ENCODE measurements at regions of chr3 and their contacts with region 1.

Region 1: GRCh38 chr3:4350789-4351163 is 47.6 kb downstream of the SETMAR start:
- DNase-seq: peak; percentile 14
- H3K4me3 ChIP-seq: no peak overlapping the region
- CTCF ChIP-seq: peak; percentile 50

Region 2: DNA sequence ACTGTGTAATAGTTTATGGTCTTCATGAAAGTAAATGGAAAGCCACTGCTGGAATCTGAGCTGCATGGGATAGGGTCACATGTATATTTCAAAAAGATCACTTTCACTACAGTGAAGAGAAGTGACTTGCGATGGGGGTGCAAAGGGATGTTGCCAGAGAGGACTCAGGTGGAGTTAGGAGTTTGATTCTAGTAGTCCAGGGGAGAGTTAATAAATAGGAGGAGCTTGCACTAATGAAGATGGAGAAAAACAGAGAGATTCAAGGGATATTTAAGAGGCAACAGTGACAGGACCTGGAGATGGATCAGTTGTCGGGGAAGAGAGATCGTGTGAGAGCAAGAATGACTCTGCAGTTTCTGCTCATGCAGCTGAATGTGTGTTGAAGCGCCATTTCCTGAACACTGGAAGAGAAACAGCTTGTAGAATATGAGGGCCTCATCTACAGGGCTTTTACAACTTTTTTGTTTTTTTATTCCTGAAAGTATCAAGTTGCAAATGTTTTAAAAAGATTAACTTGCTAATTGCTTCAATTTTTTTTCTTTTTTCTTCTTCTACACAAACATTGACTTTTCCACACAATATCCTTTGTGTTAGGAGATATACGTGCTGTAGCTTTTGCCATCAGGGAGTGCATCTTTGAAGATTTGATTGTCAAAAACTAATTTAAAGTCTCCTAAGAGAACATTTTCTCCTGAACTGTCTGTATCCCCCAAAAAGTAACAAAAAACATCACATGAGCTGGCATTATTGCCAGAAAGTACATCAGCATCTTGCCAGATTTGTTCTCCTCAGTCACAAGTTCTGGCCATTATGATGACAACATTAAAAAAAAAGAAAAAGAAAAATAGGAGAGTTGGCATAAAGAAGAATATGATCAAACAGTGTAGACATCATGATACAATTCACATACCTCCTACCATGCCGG is 10.1 kb before region 1 on chr3:
- CTCF ChIA-PET with region 1: interaction called, 41 read pairs
- POLR2A ChIA-PET with region 1: no interaction called
- DNase-seq: no peak
- H3K4me3 ChIP-seq: no peak overlapping the region
- CTCF ChIP-seq: no peak

Region 3: DNA sequence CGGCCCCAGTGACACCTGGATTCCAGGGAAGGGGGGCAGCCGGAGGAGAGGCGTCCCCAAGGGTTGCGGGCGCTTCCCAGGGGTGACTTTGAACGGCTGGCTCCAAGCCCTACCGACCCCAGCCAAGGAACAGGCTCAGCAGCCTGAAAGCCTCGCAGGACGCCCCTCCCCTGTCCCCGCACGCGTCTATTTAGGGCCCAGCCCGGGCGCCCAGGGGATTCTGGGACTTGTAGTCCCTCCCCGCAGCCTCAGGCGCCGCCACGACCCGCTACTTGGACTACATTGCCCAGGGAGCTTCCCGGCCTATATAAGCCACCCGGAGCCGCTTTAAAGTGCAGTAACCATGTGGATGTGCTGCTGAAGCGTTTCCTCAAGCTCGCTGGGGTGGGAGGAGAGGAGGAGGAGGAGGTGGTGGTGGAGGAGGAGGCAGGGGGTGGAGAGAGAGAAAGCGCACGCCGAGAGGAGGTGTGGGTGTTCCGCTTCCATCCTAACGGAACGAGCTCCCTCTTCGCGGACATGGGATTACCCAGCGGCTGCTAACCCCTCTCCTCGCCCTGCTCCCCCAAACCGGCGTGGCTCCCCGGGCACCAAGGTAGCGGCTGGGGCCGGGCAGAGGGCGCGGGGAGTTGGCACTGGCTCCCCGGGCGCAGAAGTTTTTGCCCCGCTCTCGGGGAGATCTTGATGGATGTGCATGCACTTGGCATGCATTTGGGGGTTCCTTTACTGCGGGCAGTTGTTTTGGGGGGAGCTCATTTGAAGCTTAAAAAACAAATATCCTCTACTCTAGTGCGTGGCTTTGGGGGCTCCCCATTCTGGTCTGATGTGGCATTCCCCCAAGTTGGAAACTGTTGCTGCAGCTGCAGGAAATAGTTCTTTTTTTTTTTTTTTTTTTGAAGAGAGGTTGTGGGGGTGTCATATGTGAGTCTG is 142.5 kb after region 1 on chr3 and contains the start of gene ITPR1:
- CTCF ChIA-PET with region 1: interaction called, 11 read pairs
- POLR2A ChIA-PET with region 1: no interaction called
- DNase-seq: peak; percentile 76
- H3K4me3 ChIP-seq: peak within 1 kb of the TSS; percentile 86
- CTCF ChIP-seq: peak; percentile 0

Region 4: DNA sequence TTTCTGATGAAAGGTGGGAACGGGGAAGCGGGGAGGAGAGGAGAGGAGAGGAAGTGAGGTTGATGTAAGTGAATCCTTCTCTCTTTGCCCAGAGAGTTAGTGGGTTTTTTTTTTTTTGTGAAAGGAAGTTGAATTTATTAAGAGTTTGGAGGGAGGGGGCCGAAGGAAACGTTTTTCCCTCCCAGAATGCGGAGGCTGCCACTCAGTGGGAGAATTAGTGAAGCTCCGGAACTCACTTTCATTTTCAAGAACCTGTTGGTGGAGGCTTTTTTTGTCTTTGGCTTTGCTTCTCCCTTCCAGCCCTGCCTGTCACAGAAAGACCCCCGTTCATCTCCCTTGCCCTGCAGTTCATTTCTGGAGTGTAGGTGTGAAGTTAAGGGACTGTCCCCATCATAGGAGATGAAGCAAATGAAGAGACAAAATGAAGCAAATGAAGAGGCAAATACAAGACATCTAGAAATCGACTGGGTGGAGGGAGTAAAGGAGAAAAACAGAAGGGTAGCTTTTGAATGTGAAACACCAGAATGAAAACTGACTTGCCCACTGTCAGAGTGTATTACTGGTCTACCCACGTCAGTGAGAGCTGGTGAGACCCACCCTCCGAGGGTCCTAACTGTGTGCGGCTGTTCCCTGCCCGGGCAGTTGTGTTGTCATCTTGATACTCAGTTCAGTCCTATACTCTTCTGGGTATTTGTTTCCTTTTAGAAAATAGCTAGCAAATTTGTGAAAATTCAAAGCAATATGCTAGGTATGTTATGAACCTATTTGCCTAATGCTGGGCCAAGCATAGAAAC is 233.9 kb after region 1 on chr3:
- CTCF ChIA-PET with region 1: interaction called, 12 read pairs
- POLR2A ChIA-PET with region 1: no interaction called
- DNase-seq: no peak
- H3K4me3 ChIP-seq: no peak overlapping the region
- CTCF ChIP-seq: no peak

Region 5: GRCh38 chr3:4644951-4645350 is 294.2 kb after region 1 on chr3:
- CTCF ChIA-PET with region 1: interaction called, 23 read pairs
- POLR2A ChIA-PET with region 1: no interaction called
- DNase-seq: no peak
- H3K4me3 ChIP-seq: no peak overlapping the region
- CTCF ChIP-seq: no peak

Region 6: DNA sequence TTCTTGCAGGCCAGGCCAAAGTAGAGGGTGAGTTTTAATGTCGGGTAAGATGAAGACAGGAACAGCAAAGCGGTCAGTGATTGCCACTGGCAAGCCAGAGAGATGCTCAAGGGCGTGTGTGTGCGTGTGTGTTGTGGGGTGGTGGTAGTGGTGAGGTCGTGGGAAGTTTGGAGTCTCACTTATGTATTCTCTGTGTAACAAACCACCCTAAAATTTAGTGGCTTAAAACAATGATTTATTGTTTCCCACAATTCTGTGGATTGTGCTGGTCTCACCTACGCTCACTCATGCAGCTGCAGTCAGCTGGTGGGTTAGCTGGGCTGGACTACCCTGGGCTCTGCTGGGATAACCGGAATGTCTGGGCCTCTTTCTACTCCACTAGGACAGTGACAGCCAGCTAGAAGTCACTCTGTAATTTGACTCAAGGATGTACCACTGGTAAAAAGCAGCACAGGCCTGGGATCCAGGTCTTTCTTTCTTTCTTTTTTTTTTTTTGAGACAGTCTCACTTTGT is 577.6 kb after region 1 on chr3:
- CTCF ChIA-PET with region 1: no interaction called
- POLR2A ChIA-PET with region 1: no interaction called
- DNase-seq: no peak
- H3K4me3 ChIP-seq: no peak overlapping the region
- CTCF ChIP-seq: no peak

Measured in AG04449 (cell line).